ENCODE measurements at regions of chr5 and their contacts with region 1.

Region 1: GRCh38 chr5:43313035-43313853 is at the start of gene HMGCS1:
- DNase-seq: peak; percentile 99 to 100 (median 100)
- H3K4me3 ChIP-seq: peak within 1 kb of the TSS; percentile 77 to 99 (median 87)
- H3K27ac ChIP-seq: peak within 1 kb of the TSS; percentile 83 to 94
- H3K4me1 ChIP-seq: peaks cover 13 to 52% (median 24%) of the 10 kb centered on the region in 4 experiments
- H3K27me3 ChIP-seq: no peaks in the 10 kb centered on the region

Region 2: DNA sequence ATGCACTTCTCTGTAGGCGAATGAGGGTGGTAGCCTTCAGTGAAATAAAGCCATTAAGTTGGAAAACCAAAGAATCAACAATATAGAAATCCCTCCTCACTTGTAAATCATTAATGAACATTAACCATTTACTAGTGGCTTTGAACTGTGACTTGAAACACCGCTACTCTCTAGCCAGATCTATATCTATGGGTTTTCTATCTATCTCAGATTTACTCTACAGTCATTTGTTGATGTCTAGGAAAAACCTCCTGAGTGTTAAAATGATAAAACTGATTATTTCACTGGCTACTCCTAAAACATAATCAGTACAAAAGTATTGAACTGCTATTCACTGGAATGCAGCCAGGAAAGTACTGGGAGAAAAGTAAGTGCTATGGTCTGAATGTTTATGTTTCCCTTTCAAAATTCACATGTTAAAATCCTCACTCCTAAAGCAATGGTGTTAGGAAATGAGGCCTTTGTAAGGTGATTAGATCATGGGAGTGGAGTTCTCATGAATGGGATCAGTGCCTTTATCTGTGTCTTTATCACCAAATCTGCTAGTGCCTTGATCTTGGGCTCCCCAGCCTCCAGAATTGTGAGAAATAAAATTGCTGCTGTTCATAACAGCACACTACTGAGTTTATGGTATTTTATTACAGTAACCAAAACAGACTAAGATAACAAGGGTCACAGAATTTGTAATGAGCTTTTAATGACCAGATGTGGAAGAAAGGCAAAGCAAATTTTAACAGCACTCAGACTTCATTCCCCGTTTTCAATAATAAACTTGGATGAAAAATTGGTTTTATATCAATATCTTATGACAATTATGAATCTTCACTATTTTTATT is 1434.4 kb before region 1 on chr5:
- CTCF ChIA-PET with region 1: no interaction called
- POLR2A ChIA-PET with region 1: no interaction called
- DNase-seq: no peak
- H3K4me3 ChIP-seq: no peak overlapping the region
- H3K27ac ChIP-seq: no peak overlapping the region
- H3K4me1 ChIP-seq: no peaks in the 10 kb centered on the region
- H3K27me3 ChIP-seq: peaks cover 0 to 4% (median 0%) of the 10 kb centered on the region in 5 experiments

Region 3: GRCh38 chr5:43290726-43291125 is 22.5 kb before region 1 on chr5:
- CTCF ChIA-PET with region 1: no interaction called
- POLR2A ChIA-PET with region 1: no interaction called
- DNase-seq: peak in 2 of 3 donors; percentile 28 to 41
- H3K4me3 ChIP-seq: no peak overlapping the region
- H3K27ac ChIP-seq: no peak overlapping the region
- H3K4me1 ChIP-seq: no peaks in the 10 kb centered on the region
- H3K27me3 ChIP-seq: no peaks in the 10 kb centered on the region

Region 4: GRCh38 chr5:43484106-43484849 is 171.0 kb after region 1 on chr5:
- CTCF ChIA-PET with region 1: interaction called, 7 read pairs
- POLR2A ChIA-PET with region 1: interaction called, 14 read pairs
- DNase-seq: peak; percentile 91 to 95 (median 95)
- H3K4me3 ChIP-seq: peak overlapping the region; percentile 79 to 94 (median 91)
- H3K27ac ChIP-seq: peak overlapping the region; percentile 97 to 99
- H3K4me1 ChIP-seq: peaks cover 8 to 20% (median 14%) of the 10 kb centered on the region in 4 experiments
- H3K27me3 ChIP-seq: no peaks in the 10 kb centered on the region

Region 5: GRCh38 chr5:43926923-43927322 is 613.7 kb after region 1 on chr5:
- CTCF ChIA-PET with region 1: no interaction called
- POLR2A ChIA-PET with region 1: no interaction called
- DNase-seq: no peak
- H3K4me3 ChIP-seq: no peak overlapping the region
- H3K27ac ChIP-seq: no peak overlapping the region
- H3K4me1 ChIP-seq: no peaks in the 10 kb centered on the region
- H3K27me3 ChIP-seq: no peaks in the 10 kb centered on the region

Measured in common myeloid progenitor, CD34-positive (primary cell).